Body of pancreas (tissue), 4 donors: ENCODE measurements at regions of chr19 and their contacts with region 1.

Region 1: DNA sequence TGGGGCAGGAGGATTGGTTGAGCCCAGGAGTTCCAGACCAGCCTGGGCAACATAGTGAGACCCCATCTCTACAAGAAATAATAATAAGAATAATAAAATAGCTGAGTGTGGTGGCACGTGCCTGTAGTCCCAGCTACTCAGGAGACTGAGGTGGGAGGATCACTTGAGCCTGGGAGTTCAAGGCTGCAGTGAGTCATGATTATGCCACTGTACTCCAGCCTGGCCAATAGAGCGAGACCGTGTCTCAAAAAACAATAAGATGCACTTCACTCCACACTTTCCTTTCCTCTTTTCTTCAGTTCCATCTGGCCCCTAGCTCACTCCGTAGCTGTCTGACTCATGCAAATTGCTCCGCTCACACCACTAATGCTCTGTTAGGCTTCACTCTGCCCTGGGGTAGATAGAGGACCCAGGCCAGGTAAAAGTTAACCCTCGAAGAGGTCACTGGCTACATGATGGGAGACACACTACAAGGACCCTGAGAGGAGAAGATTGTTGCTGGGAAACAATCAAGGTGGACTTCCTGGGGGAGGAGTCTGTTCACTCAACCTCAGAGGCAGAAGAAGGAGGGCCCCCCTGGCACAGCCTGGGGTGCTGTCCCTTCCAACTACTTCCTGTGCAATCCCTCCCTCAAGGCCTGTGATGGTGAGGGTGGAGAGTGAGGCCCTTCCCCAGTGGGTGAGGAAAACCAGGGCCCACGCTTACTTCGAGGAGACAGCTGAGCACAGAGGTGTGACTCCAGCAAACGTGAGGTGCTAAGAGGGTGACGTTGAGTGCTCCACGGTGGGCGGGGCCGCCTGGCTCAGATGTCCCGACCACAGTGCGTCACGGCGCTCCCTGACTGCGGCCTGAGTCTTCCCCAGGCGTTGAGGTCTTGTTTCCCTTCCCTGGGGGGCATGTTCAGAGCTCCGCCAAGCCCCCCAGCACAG is 8.8 kb upstream of the TNFSF9 start:
- DNase-seq: peak in 1 of 4 donors; percentile 27
- ATAC-seq: no peak
- H3K4me3 ChIP-seq: no peak overlapping the region
- H3K27ac ChIP-seq: no peak overlapping the region
- H3K4me1 ChIP-seq: peaks cover 5% of the 10 kb centered on the region
- H3K27me3 ChIP-seq: no peaks in the 10 kb centered on the region
- CTCF ChIP-seq: no peak
- POLR2A ChIP-seq: no peak

Region 2: DNA sequence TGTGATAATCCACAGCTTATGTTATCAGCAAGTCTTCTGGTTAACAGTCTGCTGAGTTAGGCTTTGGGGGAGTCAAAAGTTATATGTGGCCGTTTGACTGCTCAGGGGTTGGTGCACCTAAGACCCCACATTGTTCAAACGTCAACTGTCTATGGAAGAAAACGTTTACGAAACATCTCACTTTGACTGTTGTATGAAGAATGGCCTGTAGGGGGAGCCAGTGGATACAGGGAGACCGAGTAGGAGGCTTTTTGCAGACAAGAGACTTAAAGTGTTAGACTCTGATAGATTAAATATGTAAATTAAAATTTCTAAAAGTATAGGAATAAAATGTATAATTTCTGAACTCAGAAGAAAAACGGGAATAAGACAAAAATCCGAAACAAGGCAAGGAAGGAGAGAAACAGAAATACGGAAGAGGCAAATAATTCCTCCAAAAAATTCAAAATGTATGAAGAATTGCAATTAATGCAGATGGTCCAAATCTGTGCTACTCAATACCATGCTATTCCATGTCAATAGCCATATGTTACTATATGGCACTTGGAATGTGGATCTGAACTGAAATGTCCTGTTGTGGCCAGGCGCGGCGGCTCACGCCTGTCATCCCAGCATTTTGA is 110.1 kb after region 1 on chr19:
- intact Hi-C with region 1: loop called (anchors 10 kb)
- DNase-seq: peak; percentile 71 to 80 (median 77)
- ATAC-seq: peak; percentile 58
- H3K4me3 ChIP-seq: no peak overlapping the region
- H3K27ac ChIP-seq: no peak overlapping the region
- H3K4me1 ChIP-seq: peaks cover 3% of the 10 kb centered on the region
- H3K27me3 ChIP-seq: no peaks in the 10 kb centered on the region
- CTCF ChIP-seq: peak; percentile 76 to 82 (median 77)
- POLR2A ChIP-seq: no peak

Region 3: GRCh38 chr19:6856749-6857372 is 334.9 kb after region 1 on chr19:
- intact Hi-C with region 1: loop called (anchors 10 kb)
- DNase-seq: no peak
- ATAC-seq: no peak
- H3K4me3 ChIP-seq: no peak overlapping the region
- H3K27ac ChIP-seq: no peak overlapping the region
- H3K4me1 ChIP-seq: no peaks in the 10 kb centered on the region
- H3K27me3 ChIP-seq: no peaks in the 10 kb centered on the region
- CTCF ChIP-seq: no peak
- POLR2A ChIP-seq: no peak